Heart left ventricle (tissue), 16 donors: ENCODE measurements at regions of chr3 and their contacts with region 1.

Region 1: DNA sequence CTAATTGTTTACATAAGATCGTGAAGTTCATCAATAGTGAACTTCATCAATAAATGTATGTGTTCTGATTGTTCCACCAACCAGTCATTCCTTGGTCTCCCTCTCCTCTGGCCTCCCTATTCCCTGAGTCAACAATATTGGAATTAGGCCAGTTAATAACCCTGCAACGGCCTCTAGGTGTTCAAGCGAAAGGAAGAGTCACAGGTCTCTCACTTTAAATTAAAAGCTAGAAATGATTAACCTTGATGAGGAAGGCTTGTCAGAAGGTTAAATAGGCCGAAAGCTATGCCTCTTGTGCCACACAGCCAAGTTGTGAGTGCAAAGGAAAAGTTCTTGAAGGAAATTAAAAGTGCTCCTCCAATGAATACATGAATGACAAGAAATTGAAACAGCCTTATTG is 89.4 kb upstream of the ACKR4 start:
- DNase-seq: no peak
- ATAC-seq: no peak
- H3K4me3 ChIP-seq: no peak overlapping the region
- H3K27ac ChIP-seq: no peak overlapping the region
- H3K4me1 ChIP-seq: no peaks in the 10 kb centered on the region
- H3K27me3 ChIP-seq: no peaks in the 10 kb centered on the region
- CTCF ChIP-seq: no peak
- POLR2A ChIP-seq: no peak

Region 2: GRCh38 chr3:132464066-132464465 is 43.6 kb before region 1 on chr3:
- intact Hi-C with region 1: no loop called
- DNase-seq: no peak
- ATAC-seq: no peak
- H3K4me3 ChIP-seq: no peak overlapping the region
- H3K27ac ChIP-seq: no peak overlapping the region
- H3K4me1 ChIP-seq: peaks cover 0 to 5% (median 0%) of the 10 kb centered on the region in 12 donors
- H3K27me3 ChIP-seq: no peaks in the 10 kb centered on the region
- CTCF ChIP-seq: no peak
- POLR2A ChIP-seq: no peak

Region 3: GRCh38 chr3:132530624-132531023 is 23.0 kb after region 1 on chr3:
- intact Hi-C with region 1: loop called in 1 of 10 experiments (anchors 2 kb)
- DNase-seq: no peak
- ATAC-seq: no peak
- H3K4me3 ChIP-seq: no peak overlapping the region
- H3K27ac ChIP-seq: no peak overlapping the region
- H3K4me1 ChIP-seq: no peaks in the 10 kb centered on the region
- H3K27me3 ChIP-seq: no peaks in the 10 kb centered on the region
- CTCF ChIP-seq: no peak
- POLR2A ChIP-seq: no peak

Region 4: GRCh38 chr3:132595014-132595413 is 87.4 kb after region 1 on chr3:
- intact Hi-C with region 1: no loop called
- DNase-seq: no peak
- ATAC-seq: peak in 1 of 4 donors; percentile 46
- H3K4me3 ChIP-seq: no peak overlapping the region
- H3K27ac ChIP-seq: no peak overlapping the region
- H3K4me1 ChIP-seq: peaks cover 0 to 16% (median 0%) of the 10 kb centered on the region in 12 donors
- H3K27me3 ChIP-seq: no peaks in the 10 kb centered on the region
- CTCF ChIP-seq: no peak
- POLR2A ChIP-seq: no peak